GM12878 (cell line): ENCODE measurements at regions of chr9 and their contacts with region 1.

Region 1: DNA sequence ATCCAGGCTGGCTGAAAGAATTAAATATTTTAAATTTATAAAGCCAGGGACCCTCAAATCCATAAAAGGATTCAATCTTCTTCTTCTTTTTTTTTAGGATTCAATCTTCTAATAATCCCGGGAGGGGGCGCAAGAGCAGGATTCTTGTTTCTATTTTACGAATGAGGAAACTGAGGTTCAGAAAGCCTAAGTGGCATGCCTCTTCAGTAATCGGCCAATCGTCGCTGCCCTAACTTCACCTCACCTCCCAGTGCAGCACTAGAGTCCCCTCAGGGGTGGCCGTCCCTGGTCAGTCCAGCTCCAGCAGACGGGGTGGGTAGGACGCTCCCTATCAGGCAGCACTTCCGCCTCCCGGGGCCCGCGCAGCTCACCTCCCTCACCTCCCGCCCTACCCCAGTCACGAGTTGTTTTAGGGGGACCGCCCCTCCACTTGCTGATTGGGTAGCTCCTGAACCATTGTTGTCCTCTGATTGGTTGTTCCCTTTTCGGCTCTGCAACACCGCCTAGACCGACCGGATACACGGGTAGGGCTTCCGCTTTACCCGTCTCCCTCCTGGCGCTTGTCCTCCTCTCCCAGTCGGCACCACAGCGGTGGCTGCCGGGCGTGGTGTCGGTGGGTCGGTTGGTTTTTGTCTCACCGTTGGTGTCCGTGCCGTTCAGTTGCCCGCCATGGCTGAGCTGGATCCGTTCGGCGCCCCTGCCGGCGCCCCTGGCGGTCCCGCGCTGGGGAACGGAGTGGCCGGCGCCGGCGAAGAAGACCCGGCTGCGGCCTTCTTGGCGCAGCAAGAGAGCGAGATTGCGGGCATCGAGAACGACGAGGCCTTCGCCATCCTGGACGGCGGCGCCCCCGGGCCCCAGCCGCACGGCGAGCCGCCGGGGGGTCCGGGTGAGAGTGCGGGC is at the start of gene CLTA:
- DNase-seq: peak; percentile 97
- ATAC-seq: peak; percentile 98
- H3K4me3 ChIP-seq: peak within 1 kb of the TSS; percentile 86
- H3K27ac ChIP-seq: peak within 1 kb of the TSS; percentile 88
- H3K4me1 ChIP-seq: peaks cover 13% of the 10 kb centered on the region
- H3K27me3 ChIP-seq: no peaks in the 10 kb centered on the region
- CTCF ChIP-seq: peak; percentile 43 to 49 (median 46); a peak in 5 of 6 replicates
- EP300 ChIP-seq: peak in 1 of 2 experiments; percentile 49; a peak in 2 of 4 replicates
- POLR2A ChIP-seq: peak; percentile 100
- RAD21 ChIP-seq: 0 out of 2 replicates have a peak, but pooled peaks have one; percentile 13
- polyA plus RNA-seq, gene CLTA: 49.0 to 103 TPM

Region 2: GRCh38 chr9:36207016-36207415 is 16.4 kb after region 1 on chr9:
- CTCF ChIA-PET with region 1: interaction called, 12 read pairs
- POLR2A ChIA-PET with region 1: interaction called, 6 read pairs
- RAD21 ChIA-PET with region 1: interaction called, 4 read pairs
- SMC1A ChIA-PET with region 1: interaction called, 8 read pairs
- in situ Hi-C with region 1: no loop called
- intact Hi-C with region 1: no loop called
- DNase-seq: no peak
- ATAC-seq: no peak
- H3K4me3 ChIP-seq: no peak overlapping the region
- H3K27ac ChIP-seq: no peak overlapping the region; the same call in 1 of the 2 replicates
- H3K4me1 ChIP-seq: peaks cover 3% of the 10 kb centered on the region; the same call in 1 of the 2 replicates
- H3K27me3 ChIP-seq: no peaks in the 10 kb centered on the region
- CTCF ChIP-seq: no peak
- EP300 ChIP-seq: no peak
- POLR2A ChIP-seq: no peak
- RAD21 ChIP-seq: no peak

Region 3: GRCh38 chr9:36258208-36258988 is 67.8 kb after region 1 on chr9 and contains the start of gene GNE:
- CTCF ChIA-PET with region 1: interaction called, 3 read pairs
- POLR2A ChIA-PET with region 1: interaction called, 8 read pairs
- RAD21 ChIA-PET with region 1: interaction called, 10 read pairs
- SMC1A ChIA-PET with region 1: interaction called, 6 read pairs
- in situ Hi-C with region 1: no loop called
- intact Hi-C with region 1: loop called (anchors 5 kb)
- DNase-seq: peak; percentile 78
- ATAC-seq: peak; percentile 93
- H3K4me3 ChIP-seq: peak within 1 kb of the TSS; percentile 76
- H3K27ac ChIP-seq: peak within 1 kb of the TSS; percentile 78
- H3K4me1 ChIP-seq: peaks cover 3% of the 10 kb centered on the region
- H3K27me3 ChIP-seq: no peaks in the 10 kb centered on the region
- CTCF ChIP-seq: 0 out of 6 replicates have a peak, but pooled peaks of 1 of the 3 experiments have one; percentile 0
- EP300 ChIP-seq: 0 out of 4 replicates have a peak, but pooled peaks of 1 of the 2 experiments have one; percentile 22
- POLR2A ChIP-seq: peak; percentile 96
- RAD21 ChIP-seq: no peak
- polyA plus RNA-seq, gene GNE: 4.1 to 6.0 TPM